Natural killer cell (primary cell): ENCODE measurements at regions of chr1 and their contacts with region 1.

Region 1: DNA sequence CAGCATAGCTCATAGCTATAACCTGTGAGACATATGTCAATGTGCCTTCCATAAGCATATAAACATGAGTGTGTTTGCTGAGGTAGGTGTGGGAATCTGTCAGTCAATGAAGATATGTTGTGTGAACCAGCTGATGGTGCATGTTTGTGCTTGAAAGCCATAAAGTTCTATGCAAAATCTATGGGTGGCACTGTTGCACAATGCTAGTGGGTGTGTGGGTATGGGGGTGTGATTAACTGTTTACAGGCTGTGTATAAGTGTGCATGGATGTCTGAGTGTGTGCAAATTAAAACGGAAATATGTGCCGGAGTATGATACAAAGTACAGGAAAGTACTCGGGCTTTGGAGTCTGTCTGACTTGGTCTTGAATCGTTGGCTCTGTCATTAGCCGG is 1.0 kb upstream of the ATP2B4 start:
- DNase-seq: peak; percentile 55 to 90
- ATAC-seq: peak; percentile 58 to 82 (median 74)
- H3K4me3 ChIP-seq: peak overlapping the region; percentile 86
- H3K4me3 Mint-ChIP-seq: peak overlapping the region; percentile 98
- H3K27ac ChIP-seq: peak overlapping the region; percentile 84
- H3K27ac Mint-ChIP-seq: peak overlapping the region; percentile 85 to 95
- H3K4me1 ChIP-seq: peaks cover 42% of the 10 kb centered on the region
- H3K4me1 Mint-ChIP-seq: peaks cover 48 to 58% of the 10 kb centered on the region in 2 donors
- H3K27me3 ChIP-seq: no peaks in the 10 kb centered on the region
- H3K27me3 Mint-ChIP-seq: no peaks in the 10 kb centered on the region
- CTCF ChIP-seq: peak; percentile 63

Region 2: DNA sequence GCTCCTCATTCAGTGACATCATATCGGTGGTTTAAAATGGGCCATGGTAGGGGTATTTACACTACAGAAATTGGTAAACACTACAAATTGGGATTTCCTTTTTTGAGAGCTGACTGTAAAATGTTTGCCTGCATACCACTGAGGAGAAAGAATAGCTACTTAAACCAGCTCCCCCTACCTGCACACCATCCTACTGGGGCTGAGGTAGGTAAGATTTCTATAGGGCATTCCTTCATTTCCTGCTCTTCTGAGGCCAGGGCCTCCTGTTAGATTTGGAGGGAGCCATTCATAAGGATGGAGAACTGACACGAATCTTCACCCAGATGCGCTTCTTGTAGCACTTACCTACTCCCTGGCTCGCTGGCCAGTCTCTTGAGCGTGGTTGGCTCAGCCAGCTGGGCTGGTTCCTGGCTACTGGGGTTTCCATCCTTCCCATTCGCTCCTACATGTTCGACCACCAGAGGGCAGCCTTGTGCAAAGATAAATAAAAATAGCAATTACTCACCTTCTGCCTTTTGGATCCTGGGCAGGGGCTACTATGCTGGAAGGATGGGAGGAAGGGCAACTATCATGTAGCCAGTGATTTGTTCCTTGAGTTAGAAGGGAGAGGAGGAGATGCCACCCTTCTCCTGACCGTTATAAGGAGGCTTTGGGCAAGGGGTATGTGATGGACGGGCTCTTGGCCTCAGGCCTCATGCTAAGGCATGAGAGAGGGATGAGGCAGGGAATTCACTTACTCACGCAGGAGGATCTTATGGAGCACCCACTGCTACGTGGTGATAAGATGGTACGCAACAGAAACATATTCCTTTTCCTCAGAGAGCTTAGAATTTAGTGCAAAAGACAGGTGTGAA is 121.0 kb before region 1 on chr1:
- intact Hi-C with region 1: loop called (anchors 1 kb)
- DNase-seq: peak; percentile 71 to 88
- ATAC-seq: peak; percentile 76 to 87 (median 84)
- H3K4me3 ChIP-seq: no peak overlapping the region
- H3K4me3 Mint-ChIP-seq: no peak overlapping the region
- H3K27ac ChIP-seq: no peak overlapping the region
- H3K27ac Mint-ChIP-seq: no peak overlapping the region
- H3K4me1 ChIP-seq: peaks cover 3% of the 10 kb centered on the region
- H3K4me1 Mint-ChIP-seq: peaks cover 0 to 4% of the 10 kb centered on the region in 2 donors
- H3K27me3 ChIP-seq: no peaks in the 10 kb centered on the region
- H3K27me3 Mint-ChIP-seq: peaks cover 0 to 7% of the 10 kb centered on the region in 2 donors
- CTCF ChIP-seq: peak; percentile 75

Region 3: GRCh38 chr1:203609979-203610493 is 15.6 kb before region 1 on chr1:
- intact Hi-C with region 1: loop called (anchors 1 kb)
- DNase-seq: no peak
- ATAC-seq: no peak
- H3K4me3 ChIP-seq: no peak overlapping the region
- H3K4me3 Mint-ChIP-seq: no peak overlapping the region
- H3K27ac ChIP-seq: no peak overlapping the region
- H3K27ac Mint-ChIP-seq: no peak overlapping the region
- H3K4me1 ChIP-seq: peaks cover 34% of the 10 kb centered on the region
- H3K4me1 Mint-ChIP-seq: peaks cover 20 to 50% of the 10 kb centered on the region in 2 donors
- H3K27me3 ChIP-seq: no peaks in the 10 kb centered on the region
- H3K27me3 Mint-ChIP-seq: no peaks in the 10 kb centered on the region
- CTCF ChIP-seq: no peak

Region 4: DNA sequence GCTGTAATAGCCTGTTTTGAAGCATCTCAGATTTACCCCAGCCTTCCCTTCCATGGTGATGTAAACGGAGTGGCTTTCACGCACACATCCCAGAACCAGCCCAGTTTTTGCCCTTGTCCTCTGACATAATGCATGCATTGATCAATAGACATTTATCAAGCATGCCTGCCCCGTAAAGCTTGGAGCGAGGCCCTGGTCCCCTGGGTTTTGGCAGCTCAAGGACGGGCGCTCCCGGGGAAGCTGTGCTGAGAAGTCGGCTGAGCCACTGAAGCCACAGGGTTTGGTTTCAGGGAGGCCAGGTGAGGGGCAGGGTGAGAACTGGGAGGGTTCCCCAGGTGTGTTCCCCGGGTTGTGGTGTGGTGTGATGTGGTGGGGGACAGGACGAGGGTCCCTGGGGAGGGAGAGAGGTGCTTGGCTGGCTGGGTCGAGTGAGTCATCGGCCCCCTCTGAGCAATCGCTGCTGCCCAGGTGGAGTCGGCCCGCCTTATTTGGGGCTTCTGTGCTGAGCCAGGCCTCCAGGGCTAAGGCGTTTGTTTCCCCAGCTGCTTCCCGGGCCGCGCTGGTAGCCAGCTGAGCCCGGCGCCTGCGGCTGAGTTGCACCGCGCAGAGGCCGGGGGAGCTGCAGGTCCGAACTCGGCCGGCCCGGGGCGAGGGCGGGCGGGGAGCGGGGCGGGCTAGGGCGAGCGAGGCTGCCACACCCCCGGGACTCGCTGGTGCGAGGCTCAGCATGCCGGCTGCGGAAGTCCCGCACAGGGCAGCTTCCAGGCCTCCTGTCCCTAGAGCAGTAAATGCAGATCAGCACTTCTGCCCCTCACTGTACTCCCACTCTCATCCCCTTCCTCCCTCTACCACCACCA is 24.6 kb after region 1 on chr1:
- intact Hi-C with region 1: loop called (anchors 1 kb)
- DNase-seq: peak; percentile 68 to 79
- ATAC-seq: peak; percentile 40 to 59 (median 42)
- H3K4me3 ChIP-seq: peak overlapping the region; percentile 26
- H3K4me3 Mint-ChIP-seq: peak overlapping the region; percentile 86
- H3K27ac ChIP-seq: peak overlapping the region; percentile 89
- H3K27ac Mint-ChIP-seq: peak overlapping the region; percentile 89 to 99
- H3K4me1 ChIP-seq: peaks cover 76% of the 10 kb centered on the region
- H3K4me1 Mint-ChIP-seq: peaks cover 66 to 70% of the 10 kb centered on the region in 2 donors
- H3K27me3 ChIP-seq: no peaks in the 10 kb centered on the region
- H3K27me3 Mint-ChIP-seq: no peaks in the 10 kb centered on the region
- CTCF ChIP-seq: no peak

Region 5: DNA sequence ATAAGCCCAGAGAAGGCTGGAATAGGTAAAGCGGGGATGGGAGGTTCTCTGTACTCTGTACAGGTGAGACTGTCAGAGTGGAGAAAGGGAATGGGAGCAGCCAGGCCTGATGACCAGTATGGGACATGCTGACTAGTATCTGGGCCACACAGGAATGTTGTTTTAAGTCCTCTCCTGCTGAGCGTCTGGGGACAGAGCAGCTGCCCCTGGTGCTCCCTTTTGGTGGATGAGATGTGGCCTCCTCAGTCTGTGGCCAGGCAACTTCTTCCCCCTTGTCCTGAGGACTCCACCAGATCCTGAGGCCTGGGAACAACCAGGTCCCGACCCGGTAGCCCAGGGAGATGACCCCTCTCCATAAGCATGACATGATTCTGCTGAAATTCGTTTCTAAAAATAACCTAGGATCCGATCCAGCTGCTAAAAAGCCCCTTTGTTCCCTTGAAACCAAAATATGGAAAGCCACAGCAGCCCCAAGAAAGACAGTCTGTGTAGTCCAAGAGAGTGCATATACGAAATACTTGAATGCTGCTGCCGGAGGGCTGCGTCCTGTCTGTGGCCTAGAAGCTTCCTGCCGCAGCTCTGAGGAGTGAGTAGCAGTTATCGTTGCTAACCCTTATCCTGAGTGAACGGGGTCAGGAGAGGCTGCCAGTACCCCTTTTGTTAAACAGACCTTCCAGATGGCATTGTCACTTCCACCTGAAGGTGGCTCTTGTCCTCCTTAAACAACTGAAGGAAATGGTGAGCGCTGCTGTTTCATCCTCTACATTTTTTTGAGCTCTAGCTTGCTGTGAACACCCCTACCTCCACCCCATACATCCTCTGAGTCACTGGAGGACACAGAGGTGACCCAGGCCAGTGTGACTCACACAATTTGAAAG is 48.2 kb after region 1 on chr1:
- intact Hi-C with region 1: loop called (anchors 1 kb)
- DNase-seq: peak; percentile 70 to 91
- ATAC-seq: peak; percentile 75 to 91 (median 81)
- H3K4me3 ChIP-seq: no peak overlapping the region
- H3K4me3 Mint-ChIP-seq: peak overlapping the region; percentile 90
- H3K27ac ChIP-seq: peak overlapping the region; percentile 81
- H3K27ac Mint-ChIP-seq: peak overlapping the region; percentile 93 to 99
- H3K4me1 ChIP-seq: peaks cover 64% of the 10 kb centered on the region
- H3K4me1 Mint-ChIP-seq: peaks cover 76 to 89% of the 10 kb centered on the region in 2 donors
- H3K27me3 ChIP-seq: no peaks in the 10 kb centered on the region
- H3K27me3 Mint-ChIP-seq: no peaks in the 10 kb centered on the region
- CTCF ChIP-seq: peak; percentile 50

Region 6: GRCh38 chr1:203702130-203702577 is 76.5 kb after region 1 on chr1:
- intact Hi-C with region 1: loop called (anchors 1 kb)
- DNase-seq: peak; percentile 62 to 87
- ATAC-seq: peak; percentile 61 to 84 (median 82)
- H3K4me3 ChIP-seq: no peak overlapping the region
- H3K4me3 Mint-ChIP-seq: no peak overlapping the region
- H3K27ac ChIP-seq: peak overlapping the region; percentile 25
- H3K27ac Mint-ChIP-seq: peak overlapping the region; percentile 71 to 84
- H3K4me1 ChIP-seq: peaks cover 3% of the 10 kb centered on the region
- H3K4me1 Mint-ChIP-seq: peaks cover 15 to 21% of the 10 kb centered on the region in 2 donors
- H3K27me3 ChIP-seq: no peaks in the 10 kb centered on the region
- H3K27me3 Mint-ChIP-seq: no peaks in the 10 kb centered on the region
- CTCF ChIP-seq: peak; percentile 93

Region 7: DNA sequence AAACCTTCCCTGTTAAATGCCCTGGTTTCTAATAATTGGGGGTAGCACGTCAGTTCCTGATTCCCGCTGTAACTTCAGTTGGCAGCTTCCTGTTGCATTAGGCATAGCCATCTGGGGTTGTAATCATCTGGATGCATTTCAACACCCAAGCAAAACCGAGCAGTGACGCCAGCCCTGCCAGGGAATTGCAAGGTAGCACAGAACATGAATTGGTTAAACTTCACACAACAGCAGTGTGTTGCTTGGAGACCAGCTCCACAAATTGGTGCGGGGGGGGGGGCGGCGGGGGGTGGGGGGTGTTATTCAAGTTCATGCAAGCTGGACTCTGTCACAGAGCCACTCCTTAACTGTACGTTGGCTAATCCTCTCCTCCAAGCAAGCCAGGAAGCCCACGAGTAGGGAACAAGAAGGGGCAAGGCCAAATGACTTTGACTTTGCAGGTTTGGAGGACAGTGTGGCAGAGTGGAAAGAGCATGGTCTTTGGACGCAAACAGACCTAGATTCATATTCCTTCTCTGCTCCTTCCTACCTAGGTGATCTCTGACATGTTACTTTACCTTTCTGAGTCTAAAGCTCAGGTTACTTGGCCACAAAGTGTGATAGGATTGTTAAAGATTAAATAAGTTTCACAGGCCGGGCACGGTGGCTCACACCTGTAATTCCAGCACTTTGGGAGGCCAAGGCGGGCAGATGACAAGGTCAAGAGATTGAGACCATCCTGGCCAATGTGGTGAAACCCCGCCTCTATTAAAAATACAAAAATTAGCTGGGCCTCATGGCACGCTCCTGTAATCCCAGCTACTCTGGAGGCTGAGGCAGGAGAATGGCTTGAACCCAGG is 144.1 kb after region 1 on chr1:
- intact Hi-C with region 1: loop called (anchors 1 kb)
- DNase-seq: peak in 1 of 2 donors; percentile 26
- ATAC-seq: peak in 2 of 3 donors; percentile 9 to 24
- H3K4me3 ChIP-seq: no peak overlapping the region
- H3K4me3 Mint-ChIP-seq: peak overlapping the region; percentile 71
- H3K27ac ChIP-seq: peak overlapping the region; percentile 42
- H3K27ac Mint-ChIP-seq: peak overlapping the region; percentile 71 to 86
- H3K4me1 ChIP-seq: peaks cover 43% of the 10 kb centered on the region
- H3K4me1 Mint-ChIP-seq: peaks cover 46 to 49% of the 10 kb centered on the region in 2 donors
- H3K27me3 ChIP-seq: no peaks in the 10 kb centered on the region
- H3K27me3 Mint-ChIP-seq: no peaks in the 10 kb centered on the region
- CTCF ChIP-seq: no peak